PC-3 (cell line): ENCODE measurements at regions of chr18 and their contacts with region 1.

Region 1: DNA sequence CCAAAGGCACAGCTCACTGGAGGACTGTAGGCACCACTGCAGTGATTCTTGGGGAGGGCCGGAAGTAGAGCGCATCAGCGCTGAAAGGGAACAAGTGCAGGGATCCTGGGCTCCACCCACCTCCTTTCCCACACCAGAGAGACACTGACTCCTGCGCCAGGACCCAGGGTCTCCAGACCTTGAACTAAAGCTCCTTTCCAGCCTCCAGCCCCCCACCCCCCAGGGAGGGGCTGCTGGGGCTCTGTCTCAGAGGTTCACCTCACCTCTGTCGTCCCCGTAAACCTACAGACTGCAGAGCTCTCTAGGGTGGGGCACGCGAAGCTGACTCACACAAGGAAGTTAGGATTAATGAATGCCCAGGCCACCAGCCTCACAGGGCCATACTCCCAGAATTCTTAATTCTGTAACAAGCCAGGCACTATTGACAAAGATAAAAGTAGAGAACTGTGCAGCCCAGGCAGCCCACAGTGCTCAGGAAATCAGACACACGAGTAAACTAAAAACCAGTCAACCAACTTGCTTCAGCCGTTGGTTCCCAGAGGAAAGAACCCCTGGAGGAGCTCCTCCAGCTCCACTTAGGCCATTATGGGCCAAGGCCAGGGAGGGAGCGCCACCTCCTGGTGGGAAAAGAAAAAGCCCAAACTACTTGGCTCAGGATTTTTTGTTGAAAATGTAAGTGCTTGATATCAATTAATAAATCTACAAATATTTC is 45.1 kb upstream of the ACAA2 start:
- DNase-seq: peak; percentile 61
- ATAC-seq: peak; percentile 80
- H3K4me3 ChIP-seq: no peak overlapping the region
- H3K27ac ChIP-seq: peak overlapping the region; percentile 23; the same call in 1 of the 2 replicates
- H3K4me1 ChIP-seq: peaks cover 7% of the 10 kb centered on the region; the same call in 1 of the 2 replicates
- H3K27me3 ChIP-seq: no peaks in the 10 kb centered on the region
- CTCF ChIP-seq: peak; percentile 77

Region 2: DNA sequence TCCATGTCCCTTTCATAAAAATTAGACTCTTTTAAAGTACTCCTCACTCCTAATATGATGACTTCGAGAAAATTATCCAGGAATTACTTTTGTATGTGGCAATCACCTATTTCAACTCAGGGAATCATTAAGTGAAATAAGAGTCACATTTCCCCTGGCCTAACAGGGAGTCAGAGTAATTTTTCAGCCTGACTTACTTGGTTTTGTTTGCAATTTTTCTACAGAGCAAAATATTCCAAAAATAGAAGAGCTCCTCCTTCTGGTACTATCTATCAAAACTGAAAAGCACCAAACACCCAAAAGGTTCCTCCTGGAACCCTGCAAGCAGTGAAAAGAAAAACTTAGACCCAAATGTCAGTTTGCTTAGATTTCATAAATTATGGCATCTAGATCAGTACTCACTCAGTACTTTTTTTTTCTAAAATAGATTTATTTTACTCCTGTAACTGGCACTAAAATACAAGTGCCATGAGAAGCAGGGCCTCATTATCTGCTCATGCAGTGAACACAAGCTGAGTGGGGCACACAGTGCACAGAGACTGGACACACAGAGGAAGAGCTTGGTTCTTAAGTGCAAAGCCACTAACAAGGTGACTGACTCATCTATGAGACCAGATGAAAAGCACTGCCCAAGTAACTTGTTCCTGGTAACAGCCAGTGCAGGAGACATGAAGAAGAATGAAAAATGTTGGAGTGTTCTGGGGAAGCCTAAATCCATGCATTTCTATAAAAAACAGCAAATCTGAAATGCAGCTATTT is 73.9 kb before region 1 on chr18:
- CTCF ChIA-PET with region 1: no interaction called
- POLR2A ChIA-PET with region 1: no interaction called
- intact Hi-C with region 1: loop called (anchors 2 kb)
- DNase-seq: peak; percentile 23
- ATAC-seq: peak; percentile 27
- H3K4me3 ChIP-seq: no peak overlapping the region
- H3K27ac ChIP-seq: no peak overlapping the region
- H3K4me1 ChIP-seq: 0 out of 2 replicates have a peak, but pooled peaks cover 4% of the 10 kb centered on the region
- H3K27me3 ChIP-seq: no peaks in the 10 kb centered on the region
- CTCF ChIP-seq: peak; percentile 39; the same call in 1 of the 2 replicates

Region 3: GRCh38 chr18:49795612-49796552 is 62.6 kb before region 1 on chr18:
- CTCF ChIA-PET with region 1: no interaction called
- POLR2A ChIA-PET with region 1: no interaction called
- intact Hi-C with region 1: loop called (anchors 5 kb)
- DNase-seq: peak; percentile 39
- ATAC-seq: peak; percentile 79
- H3K4me3 ChIP-seq: no peak overlapping the region
- H3K27ac ChIP-seq: peak overlapping the region; percentile 18; the same call in 1 of the 2 replicates
- H3K4me1 ChIP-seq: peaks cover 8% of the 10 kb centered on the region; the same call in 1 of the 2 replicates
- H3K27me3 ChIP-seq: no peaks in the 10 kb centered on the region
- CTCF ChIP-seq: no peak

Region 4: GRCh38 chr18:49819823-49820671 is 38.4 kb before region 1 on chr18:
- CTCF ChIA-PET with region 1: no interaction called
- POLR2A ChIA-PET with region 1: no interaction called
- intact Hi-C with region 1: no loop called
- DNase-seq: no peak
- ATAC-seq: no peak
- H3K4me3 ChIP-seq: no peak overlapping the region
- H3K27ac ChIP-seq: no peak overlapping the region
- H3K4me1 ChIP-seq: no peaks in the 10 kb centered on the region
- H3K27me3 ChIP-seq: no peaks in the 10 kb centered on the region
- CTCF ChIP-seq: no peak